BJ (cell line): ENCODE measurements at regions of chr12 and their contacts with region 1.

Region 1: GRCh38 chr12:109027767-109028166 is 6.9 kb upstream of the SVOP start:
- DNase-seq: no peak
- H3K4me3 ChIP-seq: no peak overlapping the region
- H3K27me3 ChIP-seq: no peaks in the 10 kb centered on the region
- CTCF ChIP-seq: no peak

Region 2: GRCh38 chr12:109084425-109084824 is 56.7 kb after region 1 on chr12:
- CTCF ChIA-PET with region 1: no interaction called
- POLR2A ChIA-PET with region 1: interaction called, 13 read pairs
- DNase-seq: no peak
- H3K4me3 ChIP-seq: no peak overlapping the region
- H3K27me3 ChIP-seq: no peaks in the 10 kb centered on the region
- CTCF ChIP-seq: no peak